ENCODE measurements at regions of chr3 and their contacts with region 1.

Region 1: GRCh38 chr3:17013050-17013449 is 128.3 kb downstream of the PLCL2 start:
- DNase-seq: peak; percentile 48
- ATAC-seq: peak; percentile 90
- H3K4me3 ChIP-seq: no peak overlapping the region
- H3K27ac ChIP-seq: no peak overlapping the region
- H3K4me1 ChIP-seq: no peaks in the 10 kb centered on the region
- H3K27me3 ChIP-seq: no peaks in the 10 kb centered on the region
- CTCF ChIP-seq: no peak

Region 2: GRCh38 chr3:16906682-16907081 is 106.4 kb before region 1 on chr3:
- CTCF ChIA-PET with region 1: no interaction called
- POLR2A ChIA-PET with region 1: no interaction called
- intact Hi-C with region 1: loop called (anchors 5 kb)
- DNase-seq: peak; percentile 55
- ATAC-seq: peak; percentile 81
- H3K4me3 ChIP-seq: peak overlapping the region; percentile 1; the same call in 1 of the 2 replicates
- H3K27ac ChIP-seq: peak overlapping the region; percentile 51
- H3K4me1 ChIP-seq: peaks cover 22% of the 10 kb centered on the region
- H3K27me3 ChIP-seq: no peaks in the 10 kb centered on the region
- CTCF ChIP-seq: no peak

Region 3: DNA sequence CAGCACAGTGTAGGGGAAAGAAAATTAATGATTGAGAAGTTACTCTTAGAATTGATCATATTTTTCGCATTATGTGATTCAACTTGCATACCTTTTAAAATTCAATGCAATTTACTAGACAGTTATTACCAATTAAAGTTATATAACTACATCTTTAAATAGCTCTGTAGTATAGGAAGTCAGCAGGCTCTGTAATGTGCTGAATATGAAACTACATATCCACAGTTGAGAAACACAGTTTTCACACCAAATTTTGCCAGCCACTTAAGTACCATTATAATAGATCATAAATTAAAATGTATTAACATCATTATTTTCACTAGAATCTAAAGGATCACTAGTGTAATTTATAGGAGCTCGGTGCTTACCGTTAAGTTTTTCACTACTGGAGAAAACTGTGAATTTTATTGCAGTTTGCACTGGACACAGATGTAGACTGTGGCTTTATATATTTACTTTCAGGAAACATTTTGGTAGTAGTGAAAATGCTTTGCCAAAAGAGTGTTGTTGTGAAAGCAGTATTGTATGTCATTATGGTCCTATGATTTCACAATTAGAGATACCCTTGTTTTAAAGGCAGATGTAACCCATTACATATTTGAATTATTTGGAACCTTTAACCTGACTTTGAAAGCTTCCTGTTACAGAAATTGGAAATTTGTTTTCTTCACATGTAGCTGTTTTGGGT is 14.7 kb before region 1 on chr3:
- CTCF ChIA-PET with region 1: no interaction called
- POLR2A ChIA-PET with region 1: no interaction called
- intact Hi-C with region 1: no loop called
- DNase-seq: no peak
- ATAC-seq: no peak
- H3K4me3 ChIP-seq: no peak overlapping the region
- H3K27ac ChIP-seq: no peak overlapping the region
- H3K4me1 ChIP-seq: peaks cover 29% of the 10 kb centered on the region
- H3K27me3 ChIP-seq: no peaks in the 10 kb centered on the region
- CTCF ChIP-seq: no peak